Adrenal gland (tissue), 19 donors: ENCODE measurements at regions of chr4 and their contacts with region 1.

Region 1: DNA sequence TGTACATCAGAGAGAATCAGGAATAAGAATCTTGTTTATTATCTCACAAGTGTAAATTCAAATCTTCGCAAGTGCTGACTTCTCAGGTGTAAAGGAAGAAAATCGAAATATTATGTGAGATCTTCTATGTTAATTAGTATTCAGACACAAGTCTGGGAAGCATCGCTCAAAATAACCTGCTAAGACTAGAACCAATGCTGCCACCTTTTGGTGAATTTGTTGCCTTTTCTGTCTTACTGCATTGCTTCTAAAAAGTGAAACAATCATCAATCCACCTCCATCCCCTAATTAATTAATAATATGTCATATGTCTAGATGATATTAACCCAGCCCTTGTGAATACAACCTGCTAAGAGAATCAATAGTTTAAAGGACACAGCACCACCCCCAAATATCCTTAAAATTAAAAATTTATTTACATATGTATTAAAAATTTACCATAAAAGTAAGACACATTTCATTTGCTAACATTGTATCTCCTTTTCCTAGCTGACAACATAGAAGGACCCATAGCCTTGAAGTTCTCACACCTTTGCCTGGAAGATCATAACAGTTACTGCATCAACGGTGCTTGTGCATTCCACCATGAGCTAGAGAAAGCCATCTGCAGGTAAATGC is 3.5 kb downstream of the EPGN start:
- DNase-seq: peak in 5 of 7 donors; percentile 19 to 62 (median 26)
- H3K4me3 ChIP-seq: no peak overlapping the region
- H3K27ac ChIP-seq: no peak overlapping the region
- H3K4me1 ChIP-seq: no peaks in the 10 kb centered on the region
- H3K27me3 ChIP-seq: no peaks in the 10 kb centered on the region
- CTCF ChIP-seq: peak; percentile 27 to 69 (median 62)
- POLR2A ChIP-seq: no peak

Region 2: GRCh38 chr4:74189331-74190043 is 122.3 kb before region 1 on chr4:
- intact Hi-C with region 1: loop called (anchors 5 to 10 kb)
- DNase-seq: peak in 1 of 7 donors; percentile 12
- H3K4me3 ChIP-seq: no peak overlapping the region
- H3K27ac ChIP-seq: no peak overlapping the region
- H3K4me1 ChIP-seq: no peaks in the 10 kb centered on the region
- H3K27me3 ChIP-seq: no peaks in the 10 kb centered on the region
- CTCF ChIP-seq: peak; percentile 19 to 74 (median 54)
- POLR2A ChIP-seq: no peak

Region 3: GRCh38 chr4:74230902-74231499 is 80.8 kb before region 1 on chr4:
- intact Hi-C with region 1: loop called in 1 of 2 experiments (anchors 10 kb)
- DNase-seq: peak in 1 of 7 donors; percentile 18
- H3K4me3 ChIP-seq: no peak overlapping the region
- H3K27ac ChIP-seq: peak overlapping the region in 1 of 5 donors; percentile 12
- H3K4me1 ChIP-seq: no peaks in the 10 kb centered on the region
- H3K27me3 ChIP-seq: no peaks in the 10 kb centered on the region
- CTCF ChIP-seq: no peak
- POLR2A ChIP-seq: no peak